Cardiac septum (tissue), 1 donor: ENCODE measurements at regions of chr15 and their contacts with region 1.

Region 1: DNA sequence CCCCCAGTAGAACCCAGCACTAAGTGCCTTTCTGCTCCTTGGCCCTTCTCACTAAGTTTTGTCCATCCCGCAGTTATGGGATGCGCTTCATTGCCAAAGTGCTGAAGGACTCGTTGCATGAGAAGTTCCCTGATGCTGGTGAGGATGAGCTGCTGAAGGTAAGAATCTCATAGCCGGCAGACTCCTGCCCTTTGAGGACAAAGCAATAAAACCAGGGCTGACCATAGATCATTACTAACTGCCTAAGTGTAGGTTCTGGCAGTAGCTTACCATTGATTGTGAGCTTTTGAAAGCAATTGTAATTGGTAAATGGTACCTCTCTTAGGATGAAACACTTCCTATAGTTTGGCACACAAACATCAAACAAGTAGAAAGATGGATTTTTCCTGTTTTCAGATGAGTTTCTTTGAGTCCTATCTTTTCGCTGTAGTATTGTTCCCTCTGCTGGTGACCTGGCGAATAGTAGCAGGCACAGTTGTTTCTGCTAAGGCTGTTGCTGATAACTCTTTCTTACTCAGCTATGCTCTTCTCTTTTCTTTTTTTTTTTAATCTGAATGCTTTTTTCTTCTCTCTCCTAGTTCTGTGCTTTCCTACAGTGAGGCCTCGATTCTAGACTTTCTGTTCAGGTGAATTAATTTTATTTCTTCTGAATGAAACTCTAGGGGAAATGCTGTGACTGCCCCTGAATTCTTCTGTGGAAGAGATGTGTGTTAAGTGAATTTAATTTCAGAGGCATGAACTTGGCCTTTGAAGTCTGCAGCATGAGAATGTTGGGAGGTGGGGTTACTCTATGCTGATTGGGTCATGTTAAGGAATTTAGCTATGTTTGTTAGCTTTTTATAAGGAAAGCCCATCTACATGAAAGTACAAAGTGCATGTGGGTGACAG is 47.4 kb upstream of the CRTC3 start:
- DNase-seq: no peak

Region 2: DNA sequence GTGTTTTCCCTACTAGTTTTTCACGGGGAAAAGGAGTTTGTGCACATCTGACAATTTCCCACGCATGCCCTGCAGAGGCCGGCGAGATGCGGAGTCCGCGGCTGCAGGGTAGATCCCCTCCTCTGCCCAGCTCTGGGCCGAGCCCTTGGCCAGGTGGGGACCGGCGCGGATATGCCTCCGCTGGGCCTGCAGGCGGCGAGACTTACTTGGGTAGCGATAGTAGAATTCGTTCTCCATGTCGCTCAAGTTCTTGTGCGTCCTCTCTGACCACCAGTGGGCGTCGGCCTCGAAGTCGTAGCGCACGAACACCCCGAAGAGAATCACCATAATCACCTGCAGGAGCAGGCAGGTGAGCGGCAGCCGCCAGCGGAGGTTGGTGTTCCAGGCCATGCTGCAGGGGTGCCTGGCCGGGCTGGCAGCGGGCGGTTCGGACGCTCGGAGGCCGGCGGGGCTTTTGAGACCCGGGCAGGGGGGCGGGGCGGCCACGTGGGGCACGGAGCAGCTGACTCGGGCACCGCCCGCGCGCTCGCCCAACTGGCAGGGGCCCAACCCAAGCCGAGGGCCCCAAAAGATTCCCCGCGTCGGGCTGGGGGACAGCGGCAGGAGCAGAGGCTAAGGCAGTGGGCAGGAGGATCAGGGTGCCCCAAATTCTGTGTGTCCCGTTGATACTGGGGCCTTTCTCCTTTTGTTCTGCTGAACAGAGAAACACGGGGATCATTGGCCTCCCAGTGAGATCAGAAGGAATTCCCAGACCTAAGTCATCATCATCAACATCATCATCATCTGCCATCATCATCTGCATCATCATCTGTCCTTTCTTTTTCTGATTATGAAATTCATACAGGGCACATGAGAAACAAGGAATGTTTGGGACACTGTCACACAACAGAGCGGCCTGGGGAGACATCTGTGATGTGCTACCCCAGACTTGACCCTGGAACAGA is 985.9 kb before region 1 on chr15 and contains the start of gene RHCG:
- intact Hi-C with region 1: no loop called
- DNase-seq: peak; percentile 66
- total RNA-seq, gene RHCG: 2.0 TPM

Region 3: DNA sequence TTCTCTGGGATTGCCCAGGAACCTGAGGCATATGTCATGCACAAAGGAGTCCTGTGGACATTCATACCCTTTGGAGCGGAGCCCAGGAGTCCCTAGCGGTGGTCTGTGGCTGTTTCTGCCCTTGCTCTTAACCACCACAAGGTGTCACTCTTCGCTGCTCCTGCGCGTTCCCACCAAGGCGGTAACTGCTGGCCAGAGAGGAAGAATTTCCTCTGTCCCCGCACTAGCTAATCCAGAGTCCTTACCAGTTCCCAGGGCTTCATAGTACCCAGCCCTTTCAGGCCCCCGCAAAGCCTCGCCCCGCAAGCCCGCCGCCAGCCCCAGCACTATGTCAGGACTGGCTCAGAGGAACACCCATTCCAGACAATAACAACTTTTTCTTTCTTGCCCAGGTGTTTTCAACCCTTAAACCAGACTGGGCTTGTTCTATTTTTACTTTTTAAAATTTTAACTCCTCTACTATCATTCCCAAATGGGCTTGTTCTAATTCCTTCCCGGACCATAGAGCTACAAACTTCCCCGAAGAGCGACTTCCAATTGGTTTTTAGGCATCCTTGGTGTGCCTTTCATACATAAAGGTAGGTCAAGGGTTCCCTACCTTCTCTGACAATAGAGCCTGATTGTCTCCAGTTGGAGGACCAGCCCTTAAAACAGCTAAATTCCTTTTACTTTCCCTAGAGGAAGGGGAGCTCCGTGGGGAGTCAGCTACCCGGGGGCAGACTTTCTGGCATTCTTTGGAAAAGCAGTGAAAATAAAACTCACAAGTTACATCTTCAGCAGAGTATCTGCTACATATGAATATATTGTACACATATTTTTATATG is 162.1 kb before region 1 on chr15:
- intact Hi-C with region 1: loop called (anchors 2 kb)
- DNase-seq: peak; percentile 91

Region 4: GRCh38 chr15:90362936-90363212 is 119.5 kb before region 1 on chr15:
- intact Hi-C with region 1: loop called (anchors 1 kb)
- DNase-seq: no peak

Region 5: DNA sequence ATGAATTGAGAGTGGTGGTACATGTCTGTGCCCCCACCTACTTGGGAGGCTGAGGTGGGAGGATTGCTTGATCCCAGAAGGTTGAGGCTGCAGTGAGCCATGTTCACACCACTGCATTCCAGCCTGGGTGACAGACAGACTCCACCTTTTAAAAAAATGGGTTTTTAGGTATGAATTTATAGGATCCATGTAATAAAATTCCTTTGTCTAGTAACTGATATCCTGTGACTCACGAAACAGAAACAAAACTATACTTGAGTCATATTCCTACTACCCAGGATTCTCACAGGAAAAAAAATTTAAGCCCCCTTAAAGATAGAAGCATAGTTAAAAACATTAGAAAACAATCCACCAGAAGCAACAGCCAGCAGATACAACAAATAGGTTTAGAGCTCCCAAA is 37.3 kb after region 1 on chr15:
- intact Hi-C with region 1: no loop called
- DNase-seq: no peak